Activated T-helper 2 cell treated with anti-CD3 and anti-CD28 coated beads, Interferon-gamma antibody, Interleukin-2, Interleukin-4, amounts not matched to agents 10 μg/mL and 5 μg/mL and 100 μg/mL, durations not matched to agents 14 hours and 24 hours and 36 hours (primary cell): ENCODE measurements at regions of chr5 and their contacts with region 1.

Region 1: GRCh38 chr5:116574367-116575325 is at the start of gene SEMA6A:
- DNase-seq: peak; percentile 63
- H3K4me3 Mint-ChIP-seq: peak within 1 kb of the TSS; percentile 69
- H3K27ac Mint-ChIP-seq: no peak within 1 kb of the TSS
- H3K4me1 Mint-ChIP-seq: peaks cover 20% of the 10 kb centered on the region
- H3K27me3 Mint-ChIP-seq: peaks cover 67% of the 10 kb centered on the region
- total RNA-seq, gene SEMA6A: 0.67 TPM in 1 of 2 replicates, not detected in the other

Region 2: DNA sequence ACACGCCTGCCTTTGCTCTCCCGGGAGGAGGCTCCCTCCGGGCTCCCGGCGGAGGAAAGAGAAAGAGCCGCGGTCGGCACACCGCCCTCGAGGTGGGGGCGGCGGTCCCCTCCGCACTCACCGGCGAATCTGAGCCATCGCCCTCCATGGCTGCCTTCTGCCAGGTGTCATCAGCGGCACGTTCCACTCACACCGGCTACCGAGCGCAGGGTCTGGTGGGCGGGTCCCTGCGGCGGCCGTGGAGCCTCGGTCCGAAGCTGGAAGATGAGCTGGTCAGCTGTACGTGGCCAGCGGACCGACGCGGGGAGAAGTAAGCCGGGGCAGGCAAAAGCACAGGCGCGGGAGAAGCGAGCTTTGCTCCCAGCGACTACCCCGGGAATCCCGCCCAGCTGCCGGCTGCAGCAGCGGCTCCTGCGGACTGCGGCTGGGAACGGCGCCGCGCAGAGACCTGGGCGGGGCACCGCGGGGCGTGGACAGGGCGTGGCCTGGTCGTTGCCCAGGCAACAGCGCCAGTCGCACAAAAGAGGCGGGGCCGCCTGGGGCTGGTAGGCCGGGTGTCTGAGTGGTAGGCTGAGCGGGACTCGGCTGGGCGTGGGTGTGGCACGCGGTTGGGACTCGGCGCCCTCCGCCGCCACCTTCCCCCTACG is 1405.0 kb before region 1 on chr5 and contains the start of gene TRIM36:
- intact Hi-C with region 1: loop called (anchors 10 kb)
- DNase-seq: peak; percentile 92
- H3K4me3 Mint-ChIP-seq: peak within 1 kb of the TSS; percentile 76
- H3K27ac Mint-ChIP-seq: no peak within 1 kb of the TSS
- H3K4me1 Mint-ChIP-seq: peaks cover 10% of the 10 kb centered on the region
- H3K27me3 Mint-ChIP-seq: peaks cover 60% of the 10 kb centered on the region
- total RNA-seq, gene TRIM36: not detected in 2 replicates

Region 3: GRCh38 chr5:115296124-115297022 is 1278.3 kb before region 1 on chr5 and contains the start of gene CCDC112:
- intact Hi-C with region 1: loop called (anchors 5 kb)
- DNase-seq: peak; percentile 57
- H3K4me3 Mint-ChIP-seq: peak within 1 kb of the TSS; percentile 82
- H3K27ac Mint-ChIP-seq: no peak within 1 kb of the TSS
- H3K4me1 Mint-ChIP-seq: peaks cover 5% of the 10 kb centered on the region
- H3K27me3 Mint-ChIP-seq: peaks cover 55% of the 10 kb centered on the region
- total RNA-seq, gene CCDC112: 0.32 and 0.34 TPM in 2 replicates

Region 4: DNA sequence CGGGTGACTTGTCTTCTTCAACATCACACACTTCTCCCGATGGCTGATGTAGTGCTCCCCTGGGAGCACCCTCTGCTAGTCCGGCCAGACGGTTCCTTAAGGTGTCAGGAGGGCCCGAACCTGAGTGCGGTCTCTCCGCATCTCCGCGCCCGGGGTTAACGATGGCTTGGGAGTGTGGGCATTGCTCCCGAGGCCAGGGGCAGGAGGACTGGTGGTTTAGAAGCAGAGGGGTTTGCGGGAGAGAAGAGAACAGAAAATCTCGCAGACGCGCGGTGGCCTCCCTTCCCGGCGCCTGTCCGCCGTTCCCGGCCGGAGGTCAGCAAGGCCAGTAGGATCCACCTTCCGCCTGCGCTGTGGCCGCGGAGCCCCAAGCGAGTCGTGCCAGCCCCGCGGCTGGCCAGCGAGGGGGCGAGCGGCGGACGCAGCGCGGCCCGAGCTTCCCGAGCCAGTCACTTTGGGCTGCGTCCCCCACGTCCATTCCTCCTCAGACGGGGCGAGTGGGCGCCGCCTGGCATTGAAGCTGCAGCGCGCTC is 758.9 kb before region 1 on chr5:
- intact Hi-C with region 1: loop called (anchors 2 kb)
- DNase-seq: no peak
- H3K4me3 Mint-ChIP-seq: peak overlapping the region; percentile 58
- H3K27ac Mint-ChIP-seq: no peak overlapping the region
- H3K4me1 Mint-ChIP-seq: peaks cover 26% of the 10 kb centered on the region
- H3K27me3 Mint-ChIP-seq: peaks cover 84% of the 10 kb centered on the region

Region 5: GRCh38 chr5:115962503-115963402 is 611.9 kb before region 1 on chr5:
- intact Hi-C with region 1: loop called (anchors 2 kb)
- DNase-seq: no peak
- H3K4me3 Mint-ChIP-seq: no peak overlapping the region
- H3K27ac Mint-ChIP-seq: no peak overlapping the region
- H3K4me1 Mint-ChIP-seq: no peaks in the 10 kb centered on the region
- H3K27me3 Mint-ChIP-seq: peaks cover 63% of the 10 kb centered on the region

Region 6: DNA sequence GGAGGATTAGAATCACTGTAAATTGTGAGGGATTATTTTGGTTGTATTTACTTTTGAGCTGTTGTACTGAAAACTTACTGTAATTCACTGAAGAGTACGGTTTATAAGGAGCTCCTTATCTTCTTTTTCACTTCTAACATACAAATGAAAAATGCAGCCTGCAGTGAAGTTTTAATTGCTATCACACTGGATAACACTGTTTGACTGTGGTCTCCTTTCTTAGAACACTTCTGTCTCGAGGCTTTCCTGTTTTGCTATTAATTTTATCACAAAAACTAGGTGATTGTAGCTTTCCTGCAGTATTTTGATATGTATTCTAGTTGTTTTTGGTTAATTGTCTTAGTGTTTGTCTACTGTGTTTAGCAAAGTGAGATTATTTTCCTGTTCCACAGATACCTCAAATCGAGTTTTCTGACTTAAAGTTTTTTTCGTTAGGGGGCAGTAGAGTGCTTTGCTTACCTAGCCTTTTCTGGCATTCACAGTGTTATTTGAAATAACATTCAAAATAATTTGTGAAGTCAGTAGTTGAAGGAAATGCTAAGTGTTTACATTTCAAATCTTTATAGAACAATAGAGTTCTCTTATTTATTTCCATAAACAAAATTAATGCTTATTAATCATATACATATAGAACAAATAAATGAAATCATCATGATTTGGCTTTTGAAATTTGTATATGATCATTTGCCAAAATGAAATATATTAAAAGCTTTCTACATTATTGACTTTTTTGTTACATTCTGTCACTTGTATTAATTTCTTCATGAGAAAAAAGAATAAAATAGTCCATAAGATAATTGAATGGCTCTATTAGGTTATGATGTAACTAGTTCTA is 436.9 kb before region 1 on chr5:
- intact Hi-C with region 1: loop called (anchors 2 kb)
- DNase-seq: no peak
- H3K4me3 Mint-ChIP-seq: no peak overlapping the region
- H3K27ac Mint-ChIP-seq: no peak overlapping the region
- H3K4me1 Mint-ChIP-seq: peaks cover 21% of the 10 kb centered on the region
- H3K27me3 Mint-ChIP-seq: no peaks in the 10 kb centered on the region

Region 7: DNA sequence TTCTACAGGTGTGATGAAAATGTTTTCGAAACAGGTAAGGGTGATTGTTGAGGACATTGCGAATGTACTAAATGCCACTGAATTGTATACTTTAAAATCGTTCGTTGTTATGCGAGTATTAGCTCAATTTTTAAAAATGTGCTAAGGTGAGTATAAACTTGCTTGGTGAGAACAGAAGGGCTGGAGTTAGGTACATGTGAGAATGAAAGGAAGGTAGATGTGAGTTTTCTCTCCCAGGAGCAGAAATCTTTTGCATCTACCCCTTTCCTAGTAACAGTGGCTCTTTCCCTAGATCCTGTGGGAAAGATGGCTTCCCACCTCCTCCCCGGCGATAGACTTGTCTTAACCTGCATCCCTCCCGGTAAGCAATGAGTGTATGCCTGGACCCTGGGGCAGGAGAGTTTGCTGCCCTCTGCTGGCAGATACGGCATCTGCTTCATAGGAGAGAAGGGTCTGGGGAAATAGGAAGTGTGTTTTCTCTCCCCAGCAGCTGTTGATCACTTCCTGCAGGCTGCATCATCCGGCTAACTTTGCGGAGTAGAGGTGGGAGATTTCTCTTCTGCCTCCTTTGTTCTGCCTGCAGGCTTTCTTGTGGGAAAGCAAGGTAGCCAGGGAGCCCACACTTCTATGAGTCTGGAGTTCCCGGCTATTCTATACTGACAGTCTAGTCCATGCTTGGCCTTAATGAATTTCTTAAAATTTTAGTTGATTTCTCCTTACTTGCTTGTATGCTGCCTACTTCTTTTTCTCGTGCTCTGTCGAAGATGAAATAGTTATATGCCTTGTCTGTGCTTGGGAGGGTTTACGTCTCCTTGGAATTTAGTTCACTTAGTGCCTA is 373.3 kb after region 1 on chr5:
- intact Hi-C with region 1: loop called (anchors 1 kb)
- DNase-seq: peak; percentile 48
- H3K4me3 Mint-ChIP-seq: no peak overlapping the region
- H3K27ac Mint-ChIP-seq: no peak overlapping the region
- H3K4me1 Mint-ChIP-seq: no peaks in the 10 kb centered on the region
- H3K27me3 Mint-ChIP-seq: no peaks in the 10 kb centered on the region